Left colon (tissue), 2 donors: ENCODE measurements at regions of chr2 and their contacts with region 1.

Region 1: GRCh38 chr2:28751252-28751955 is at the start of gene PPP1CB:
- DNase-seq: peak; percentile 96
- ATAC-seq: peak; percentile 86
- total RNA-seq, gene PPP1CB: 283 to 395 TPM

Region 2: GRCh38 chr2:28594289-28595108 is 156.9 kb before region 1 on chr2:
- intact Hi-C with region 1: loop called in 1 of 2 experiments (anchors 10 kb)
- DNase-seq: peak; percentile 93 to 98
- ATAC-seq: peak; percentile 89

Region 3: GRCh38 chr2:28621172-28622100 is 130.0 kb before region 1 on chr2:
- intact Hi-C with region 1: loop called in 1 of 2 experiments (anchors 5 kb)
- DNase-seq: peak; percentile 75 to 90
- ATAC-seq: peak; percentile 66

Region 4: GRCh38 chr2:28661589-28662001 is 89.8 kb before region 1 on chr2:
- intact Hi-C with region 1: loop called in 1 of 2 experiments (anchors 10 kb)
- DNase-seq: peak; percentile 68 to 81
- ATAC-seq: peak; percentile 49

Region 5: GRCh38 chr2:28801726-28802487 is 50.5 kb after region 1 on chr2:
- intact Hi-C with region 1: no loop called
- DNase-seq: no peak
- ATAC-seq: no peak

Region 6: DNA sequence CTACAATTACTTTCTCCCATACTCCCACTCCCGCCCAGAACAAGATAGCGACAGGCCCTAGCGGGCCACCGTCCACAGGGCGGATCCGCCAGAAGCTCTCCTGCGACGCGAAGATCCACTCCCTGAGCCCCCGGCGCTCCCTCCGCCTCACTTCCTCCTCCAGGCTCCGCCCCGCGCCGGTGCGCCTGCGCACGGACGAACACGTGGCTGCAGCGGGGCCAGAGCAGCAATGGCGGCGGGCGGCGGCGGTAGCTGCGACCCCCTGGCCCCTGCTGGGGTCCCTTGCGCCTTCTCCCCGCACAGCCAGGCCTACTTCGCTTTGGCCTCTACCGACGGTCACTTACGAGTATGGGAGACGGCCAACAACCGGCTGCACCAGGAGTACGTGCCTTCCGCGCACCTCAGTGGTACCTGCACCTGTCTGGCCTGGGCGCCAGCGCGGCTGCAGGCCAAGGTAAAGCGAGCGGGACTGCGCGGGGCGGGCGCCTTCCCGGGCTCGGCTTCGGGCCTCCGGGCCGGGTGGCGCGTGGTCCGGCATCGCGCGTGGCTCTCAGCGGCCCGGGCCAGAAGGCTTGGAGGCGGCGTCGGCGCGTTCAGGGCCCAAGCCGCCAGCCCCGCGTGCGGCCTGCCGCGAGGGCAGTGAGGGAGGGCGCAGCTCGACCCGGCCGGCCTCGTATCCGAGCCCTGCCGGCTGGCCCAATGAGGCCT is 143.2 kb after region 1 on chr2 and contains the start of gene WDR43:
- intact Hi-C with region 1: no loop called
- DNase-seq: peak; percentile 96 to 99
- ATAC-seq: peak; percentile 98
- total RNA-seq, gene WDR43: 30.8 to 38.2 TPM